Activated T-helper 2 cell treated with anti-CD3 and anti-CD28 coated beads, Interferon-gamma antibody, Interleukin-2, Interleukin-4, amounts not matched to agents 10 μg/mL and 5 μg/mL and 100 μg/mL, durations not matched to agents 14 hours and 24 hours and 36 hours (primary cell): ENCODE measurements at regions of chr2 and their contacts with region 1.

Region 1: GRCh38 chr2:128473175-128474035 is 154.7 kb upstream of the HS6ST1 start:
- DNase-seq: peak; percentile 82
- H3K4me3 Mint-ChIP-seq: peak overlapping the region; percentile 24
- H3K27ac Mint-ChIP-seq: peak overlapping the region; percentile 86
- H3K4me1 Mint-ChIP-seq: peaks cover 34% of the 10 kb centered on the region
- H3K27me3 Mint-ChIP-seq: peaks cover 6% of the 10 kb centered on the region

Region 2: GRCh38 chr2:127640082-127641072 is 833.0 kb before region 1 on chr2:
- intact Hi-C with region 1: loop called (anchors 5 kb)
- DNase-seq: peak; percentile 17
- H3K4me3 Mint-ChIP-seq: peak overlapping the region; percentile 33
- H3K27ac Mint-ChIP-seq: peak overlapping the region; percentile 42
- H3K4me1 Mint-ChIP-seq: peaks cover 12% of the 10 kb centered on the region
- H3K27me3 Mint-ChIP-seq: no peaks in the 10 kb centered on the region

Region 3: GRCh38 chr2:128321784-128322714 is 151.4 kb before region 1 on chr2:
- intact Hi-C with region 1: loop called (anchors 5 kb)
- DNase-seq: peak; percentile 71
- H3K4me3 Mint-ChIP-seq: peak overlapping the region; percentile 51
- H3K27ac Mint-ChIP-seq: no peak overlapping the region
- H3K4me1 Mint-ChIP-seq: peaks cover 8% of the 10 kb centered on the region
- H3K27me3 Mint-ChIP-seq: peaks cover 12% of the 10 kb centered on the region

Region 4: GRCh38 chr2:128520791-128521190 is 47.4 kb after region 1 on chr2:
- intact Hi-C with region 1: loop called (anchors 1 kb)
- DNase-seq: peak; percentile 57
- H3K4me3 Mint-ChIP-seq: no peak overlapping the region
- H3K27ac Mint-ChIP-seq: peak overlapping the region; percentile 5
- H3K4me1 Mint-ChIP-seq: peaks cover 21% of the 10 kb centered on the region
- H3K27me3 Mint-ChIP-seq: peaks cover 8% of the 10 kb centered on the region

Region 5: GRCh38 chr2:128536925-128537620 is 63.7 kb after region 1 on chr2:
- intact Hi-C with region 1: loop called (anchors 1 kb)
- DNase-seq: no peak
- H3K4me3 Mint-ChIP-seq: peak overlapping the region; percentile 35
- H3K27ac Mint-ChIP-seq: peak overlapping the region; percentile 88
- H3K4me1 Mint-ChIP-seq: peaks cover 44% of the 10 kb centered on the region
- H3K27me3 Mint-ChIP-seq: peaks cover 3% of the 10 kb centered on the region

Region 6: GRCh38 chr2:128623776-128624424 is 150.5 kb after region 1 on chr2:
- intact Hi-C with region 1: loop called (anchors 1 kb)
- DNase-seq: peak; percentile 33
- H3K4me3 Mint-ChIP-seq: peak overlapping the region; percentile 17
- H3K27ac Mint-ChIP-seq: peak overlapping the region; percentile 19
- H3K4me1 Mint-ChIP-seq: peaks cover 21% of the 10 kb centered on the region
- H3K27me3 Mint-ChIP-seq: peaks cover 53% of the 10 kb centered on the region

Region 7: DNA sequence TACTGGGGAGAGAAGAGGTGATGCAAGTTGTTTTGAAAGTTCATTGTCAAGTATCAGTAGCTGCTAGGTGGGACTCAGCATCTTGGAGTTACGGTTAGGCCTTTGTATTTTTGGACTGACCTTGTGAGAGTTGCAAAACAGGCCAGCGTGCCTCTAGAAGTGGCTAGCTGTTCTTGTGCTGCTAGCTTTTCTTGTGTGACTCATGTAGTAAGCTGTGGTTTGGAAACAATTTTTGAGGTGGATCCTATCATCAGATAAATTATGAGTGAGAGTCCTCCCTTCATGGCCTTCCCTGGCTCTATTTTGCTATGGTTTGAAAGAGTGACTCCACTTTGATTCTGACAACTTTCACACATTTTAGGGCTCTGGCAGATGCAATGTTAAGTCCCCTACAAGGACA is 254.5 kb after region 1 on chr2:
- intact Hi-C with region 1: loop called (anchors 1 kb)
- DNase-seq: no peak
- H3K4me3 Mint-ChIP-seq: no peak overlapping the region
- H3K27ac Mint-ChIP-seq: peak overlapping the region; percentile 8
- H3K4me1 Mint-ChIP-seq: peaks cover 25% of the 10 kb centered on the region
- H3K27me3 Mint-ChIP-seq: peaks cover 47% of the 10 kb centered on the region